Common myeloid progenitor, CD34-positive (primary cell): ENCODE measurements at regions of chr11 and their contacts with region 1.

Region 1: DNA sequence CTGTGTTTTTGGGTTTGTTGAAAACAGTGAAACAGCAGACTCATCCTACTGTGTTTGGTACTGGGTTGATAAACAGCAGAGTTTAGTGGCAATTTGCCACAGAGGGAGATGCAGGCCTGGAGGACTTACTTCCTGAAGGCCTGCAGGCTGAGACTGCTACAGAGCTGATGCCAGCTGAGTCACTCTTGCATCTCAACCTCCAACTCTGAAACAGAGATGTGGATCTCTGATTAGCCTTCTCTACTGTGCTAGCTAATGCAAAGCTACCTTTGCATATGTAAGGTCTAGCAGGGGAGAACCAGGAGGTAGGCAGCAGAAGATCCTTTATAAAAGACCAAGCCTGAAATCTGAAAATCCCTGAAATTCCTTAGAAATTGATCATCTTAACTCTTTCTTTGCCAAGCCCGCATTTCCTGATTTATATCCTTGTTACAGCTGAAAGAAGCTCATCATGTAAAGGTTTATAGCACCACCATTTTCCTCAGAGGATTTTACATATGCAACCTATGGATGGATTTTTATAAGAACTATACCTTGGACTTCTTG is 14.4 kb downstream of the ATP5MG start:
- DNase-seq: peak; percentile 93 to 99 (median 98)
- H3K4me3 ChIP-seq: peak overlapping the region in 1 of 7 experiments; percentile 35
- H3K27ac ChIP-seq: peak overlapping the region in 1 of 2 experiments; percentile 79
- H3K4me1 ChIP-seq: peaks cover 16 to 26% (median 24%) of the 10 kb centered on the region in 4 experiments
- H3K27me3 ChIP-seq: no peaks in the 10 kb centered on the region

Region 2: GRCh38 chr11:118435893-118436624 is 20.2 kb after region 1 on chr11 and contains the start of gene KMT2A:
- CTCF ChIA-PET with region 1: interaction called, 7 read pairs
- POLR2A ChIA-PET with region 1: interaction called, 12 read pairs
- DNase-seq: peak; percentile 96 to 97 (median 97)
- H3K4me3 ChIP-seq: peak within 1 kb of the TSS; percentile 81 to 97 (median 90)
- H3K27ac ChIP-seq: peak within 1 kb of the TSS; percentile 81 to 90
- H3K4me1 ChIP-seq: peaks cover 28 to 60% (median 55%) of the 10 kb centered on the region in 4 experiments
- H3K27me3 ChIP-seq: no peaks in the 10 kb centered on the region